ENCODE measurements at regions of chr18 and their contacts with region 1.

Region 1: GRCh38 chr18:74597662-74598349 is at the start of gene ZNF407:
- DNase-seq: peak; percentile 92
- ATAC-seq: peak; percentile 94
- total RNA-seq, gene ZNF407: 10.7 TPM

Region 2: DNA sequence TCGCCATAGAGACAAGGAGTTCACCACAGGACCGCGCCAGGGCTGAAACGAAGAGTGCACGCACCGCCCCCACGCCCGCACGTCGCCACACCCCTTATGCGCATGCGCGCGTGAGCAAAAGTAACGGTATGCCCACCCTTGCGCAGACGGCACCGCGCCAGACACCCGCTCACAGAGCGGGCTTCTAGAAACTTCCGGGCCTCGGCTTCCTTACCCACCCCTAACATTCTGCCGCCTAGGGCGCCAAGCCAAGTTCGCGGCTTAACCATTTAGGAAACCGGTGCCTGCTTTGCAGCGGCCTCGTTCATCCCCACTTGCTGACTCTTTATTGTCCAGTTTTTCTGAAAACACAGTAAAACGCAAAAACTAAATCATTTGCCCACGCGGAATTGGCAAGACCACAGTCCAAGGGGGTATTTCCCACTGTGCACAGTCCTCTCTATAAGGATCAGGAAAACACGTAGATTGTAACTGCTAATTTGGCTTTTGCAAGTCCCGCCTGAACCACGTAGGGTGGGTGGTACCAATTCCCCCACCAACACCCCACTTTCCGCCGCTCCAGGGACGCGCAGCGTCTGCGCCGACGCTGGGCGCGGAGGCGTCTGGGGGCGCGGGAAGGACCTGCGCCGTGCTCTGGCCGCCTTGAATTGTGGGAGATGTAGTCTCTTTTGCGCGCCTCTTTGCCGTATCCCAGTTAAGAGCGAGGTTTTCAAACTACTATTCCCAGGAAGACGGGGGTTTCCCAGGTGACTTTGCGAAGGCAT is 449.8 kb before region 1 on chr18 and contains the starts of genes FBXO15 and TIMM21:
- intact Hi-C with region 1: loop called (anchors 2 kb)
- DNase-seq: peak; percentile 98
- ATAC-seq: peak; percentile 97
- total RNA-seq, gene FBXO15: not detected
- total RNA-seq, gene TIMM21: 151 TPM

Region 3: DNA sequence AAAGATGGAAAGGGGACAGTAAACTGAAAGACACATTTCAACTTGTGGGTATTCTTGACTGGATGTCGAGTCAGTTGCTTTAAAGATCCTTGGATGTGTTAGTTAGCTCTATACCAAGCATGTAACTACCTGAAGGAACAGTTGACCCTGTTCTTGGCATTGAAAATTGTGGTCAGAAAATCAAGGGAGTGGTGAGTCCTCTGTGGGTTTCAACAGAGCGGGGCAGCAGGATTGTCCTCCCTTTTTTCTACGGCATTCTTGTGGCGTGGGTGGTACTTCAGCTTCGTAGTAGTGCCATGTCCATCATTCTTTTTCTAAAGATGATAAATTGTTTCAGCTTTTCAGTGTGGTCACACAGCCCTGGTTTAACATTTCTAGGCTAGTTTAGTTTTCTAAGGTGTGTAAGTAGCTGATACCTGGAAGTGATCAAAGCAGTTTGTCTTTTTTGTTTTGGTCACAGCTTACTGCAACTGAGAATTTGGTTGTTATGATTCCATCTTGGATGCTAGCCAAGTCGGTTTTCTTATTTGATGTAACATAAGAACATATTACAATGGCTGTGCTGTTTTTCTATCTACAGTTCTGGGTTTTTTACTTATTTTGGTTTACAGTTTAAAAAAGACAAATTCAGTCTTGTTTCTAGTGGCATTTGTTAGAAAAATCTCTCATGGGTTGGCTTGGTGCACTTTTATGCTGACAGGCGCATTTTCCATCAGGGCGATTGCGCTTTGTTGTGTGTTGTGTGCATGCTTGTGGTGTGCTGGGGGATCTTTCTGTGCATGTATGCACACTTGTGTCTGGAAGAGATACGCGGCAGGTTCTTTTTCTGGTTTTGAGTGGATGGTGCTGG is 84.6 kb after region 1 on chr18:
- intact Hi-C with region 1: no loop called
- DNase-seq: no peak
- ATAC-seq: no peak

Measured in Right ventricle myocardium inferior (tissue), 1 donor.